ENCODE measurements at regions of chr3 and their contacts with region 1.

Region 1: GRCh38 chr3:168847291-168847883 is 751.7 kb upstream of the GOLIM4 start:
- DNase-seq: peak; percentile 74
- H3K4me3 ChIP-seq: peak overlapping the region; percentile 43
- H3K27ac ChIP-seq: no peak overlapping the region
- H3K4me1 ChIP-seq: no peaks in the 10 kb centered on the region
- H3K27me3 ChIP-seq: peaks cover 44% of the 10 kb centered on the region

Region 2: GRCh38 chr3:168213920-168214319 is 633.5 kb before region 1 on chr3:
- in situ Hi-C with region 1: loop called (anchors 5 kb)
- DNase-seq: peak; percentile 9
- H3K4me3 ChIP-seq: no peak overlapping the region
- H3K27ac ChIP-seq: no peak overlapping the region
- H3K4me1 ChIP-seq: no peaks in the 10 kb centered on the region
- H3K27me3 ChIP-seq: no peaks in the 10 kb centered on the region; the same call in 1 of the 2 replicates

Region 3: DNA sequence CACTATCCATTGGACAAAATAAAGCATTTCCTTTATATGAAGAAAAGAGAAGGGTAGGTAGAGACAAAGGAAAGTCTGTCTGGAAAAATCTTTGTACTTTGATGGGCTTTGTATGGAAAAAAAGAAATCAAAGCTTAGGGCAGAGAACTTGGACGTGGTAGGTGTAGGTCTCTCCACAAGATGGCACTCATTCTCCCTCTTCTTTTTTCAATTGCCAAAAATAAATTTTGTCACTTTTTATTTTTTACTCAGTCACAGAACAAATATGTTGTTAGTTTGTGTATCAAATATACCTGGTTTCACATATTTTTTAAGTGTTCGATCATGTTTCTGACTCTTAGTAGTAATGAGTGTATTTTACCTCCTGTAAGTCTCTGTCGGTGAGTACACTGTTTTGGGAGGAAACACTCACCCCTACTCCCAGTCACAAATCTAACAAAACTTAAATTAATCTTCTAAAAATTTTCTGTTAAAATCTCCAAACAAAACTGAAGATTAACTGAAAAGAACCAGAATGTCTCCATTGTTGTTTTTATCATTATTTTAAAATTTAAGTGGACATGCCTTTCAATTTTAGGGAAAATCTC is 335.9 kb before region 1 on chr3:
- in situ Hi-C with region 1: loop called (anchors 10 kb)
- DNase-seq: peak; percentile 52
- H3K4me3 ChIP-seq: no peak overlapping the region
- H3K27ac ChIP-seq: no peak overlapping the region
- H3K4me1 ChIP-seq: no peaks in the 10 kb centered on the region
- H3K27me3 ChIP-seq: peaks cover 6% of the 10 kb centered on the region; the same call in 1 of the 2 replicates

Region 4: DNA sequence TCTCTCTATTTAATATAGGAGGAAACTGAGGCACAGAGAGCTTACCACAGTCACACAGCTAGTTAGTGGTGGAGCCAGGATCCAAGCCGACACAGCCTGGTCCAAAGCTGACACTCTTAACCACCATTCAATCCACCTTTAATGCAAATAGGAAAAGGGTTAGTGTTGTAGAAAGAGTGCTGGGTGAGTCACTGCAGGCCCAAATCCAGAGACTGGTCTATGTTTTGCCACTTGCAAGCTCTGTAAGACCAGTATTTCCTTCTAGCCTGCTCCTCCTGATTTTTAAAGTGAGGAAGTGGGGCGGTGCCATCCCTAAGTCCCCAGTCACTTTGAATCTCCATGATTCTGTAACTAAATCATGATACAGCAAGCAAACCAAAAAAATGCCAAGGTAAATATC is 705.1 kb after region 1 on chr3:
- in situ Hi-C with region 1: no loop called
- DNase-seq: no peak
- H3K4me3 ChIP-seq: no peak overlapping the region
- H3K27ac ChIP-seq: no peak overlapping the region
- H3K4me1 ChIP-seq: no peaks in the 10 kb centered on the region
- H3K27me3 ChIP-seq: no peaks in the 10 kb centered on the region